ENCODE measurements at regions of chr9 and their contacts with region 1.

Region 1: DNA sequence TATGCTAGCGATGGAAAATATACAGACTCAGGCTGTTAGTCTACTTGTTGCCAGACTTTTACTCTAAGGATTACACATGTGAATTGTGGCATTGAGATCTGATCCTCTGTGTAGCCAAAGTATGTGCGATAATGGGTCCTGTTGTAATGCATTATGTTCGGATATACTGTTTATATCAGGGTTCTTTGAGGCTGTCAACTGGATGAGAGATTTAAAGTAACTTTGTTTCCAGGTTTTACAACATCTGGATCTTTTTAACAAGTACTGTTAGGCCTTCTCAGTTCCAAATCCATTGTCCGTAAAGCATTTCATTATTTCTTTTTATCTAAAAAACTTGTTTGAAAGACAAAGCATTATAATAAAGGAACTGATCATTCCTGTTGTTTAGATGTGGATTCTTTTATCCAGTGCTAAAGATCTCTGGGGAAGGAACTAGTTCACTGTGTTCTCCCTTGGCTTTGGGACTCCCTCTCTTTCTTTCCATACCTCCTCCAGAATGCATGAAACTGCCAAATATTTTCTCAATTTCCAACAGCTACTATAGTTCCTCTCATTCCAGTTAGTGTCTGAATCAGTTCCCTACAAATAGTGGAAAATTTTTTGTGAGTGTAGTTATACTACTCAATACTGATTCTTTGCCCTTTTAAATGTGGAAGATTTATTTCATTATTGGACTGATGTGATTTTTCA is 68.8 kb downstream of the HACD4 start:
- DNase-seq: no peak
- H3K4me3 ChIP-seq: no peak overlapping the region
- H3K27ac ChIP-seq: no peak overlapping the region
- H3K4me1 ChIP-seq: no peaks in the 10 kb centered on the region
- H3K27me3 ChIP-seq: no peaks in the 10 kb centered on the region
- CTCF ChIP-seq: no peak
- POLR2A ChIP-seq: no peak

Region 2: DNA sequence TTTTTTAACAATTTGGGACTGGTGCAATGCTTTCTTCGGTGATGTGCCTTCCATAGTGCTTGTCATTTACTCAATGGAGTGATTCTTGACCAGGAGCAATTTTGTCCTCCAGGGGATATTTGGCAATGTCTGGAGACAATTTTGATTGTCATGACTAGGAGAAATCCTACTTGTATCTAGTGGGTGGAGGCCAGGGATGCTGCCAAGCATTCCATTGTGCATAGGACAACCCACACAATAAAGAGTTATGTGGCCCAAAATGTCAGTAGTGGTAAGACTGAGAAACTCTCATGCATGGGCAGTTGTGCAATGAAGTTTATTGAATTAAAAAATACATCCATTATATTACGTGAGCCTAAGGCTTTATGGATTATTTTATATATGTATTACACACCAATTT is 208.1 kb before region 1 on chr9:
- CTCF ChIA-PET with region 1: no interaction called
- POLR2A ChIA-PET with region 1: no interaction called
- dilution Hi-C with region 1: no loop called
- intact Hi-C with region 1: no loop called
- DNase-seq: no peak
- H3K4me3 ChIP-seq: no peak overlapping the region
- H3K27ac ChIP-seq: no peak overlapping the region
- H3K4me1 ChIP-seq: peaks cover under 1% of the 10 kb centered on the region
- H3K27me3 ChIP-seq: no peaks in the 10 kb centered on the region
- CTCF ChIP-seq: no peak
- POLR2A ChIP-seq: no peak

Region 3: GRCh38 chr9:21102305-21102704 is 139.6 kb after region 1 on chr9:
- CTCF ChIA-PET with region 1: no interaction called
- POLR2A ChIA-PET with region 1: no interaction called
- dilution Hi-C with region 1: no loop called
- intact Hi-C with region 1: loop called (anchors 5 kb)
- DNase-seq: no peak
- H3K4me3 ChIP-seq: no peak overlapping the region
- H3K27ac ChIP-seq: no peak overlapping the region
- H3K4me1 ChIP-seq: no peaks in the 10 kb centered on the region
- H3K27me3 ChIP-seq: no peaks in the 10 kb centered on the region
- CTCF ChIP-seq: no peak
- POLR2A ChIP-seq: no peak